H1 (cell line): ENCODE measurements at regions of chr10 and their contacts with region 1.

Region 1: GRCh38 chr10:77501152-77501845 is 136.3 kb downstream of the KCNMA1 start:
- DNase-seq: no peak
- H3K4me3 ChIP-seq: no peak overlapping the region
- H3K27ac ChIP-seq: no peak overlapping the region
- H3K4me1 ChIP-seq: peaks cover 2 to 9% (median 3%) of the 10 kb centered on the region in 4 experiments; a peak in 3 of 7 replicates
- H3K27me3 ChIP-seq: no peaks in the 10 kb centered on the region
- CTCF ChIP-seq: no peak
- EP300 ChIP-seq: no peak
- POLR2A ChIP-seq: no peak
- RAD21 ChIP-seq: no peak

Region 2: DNA sequence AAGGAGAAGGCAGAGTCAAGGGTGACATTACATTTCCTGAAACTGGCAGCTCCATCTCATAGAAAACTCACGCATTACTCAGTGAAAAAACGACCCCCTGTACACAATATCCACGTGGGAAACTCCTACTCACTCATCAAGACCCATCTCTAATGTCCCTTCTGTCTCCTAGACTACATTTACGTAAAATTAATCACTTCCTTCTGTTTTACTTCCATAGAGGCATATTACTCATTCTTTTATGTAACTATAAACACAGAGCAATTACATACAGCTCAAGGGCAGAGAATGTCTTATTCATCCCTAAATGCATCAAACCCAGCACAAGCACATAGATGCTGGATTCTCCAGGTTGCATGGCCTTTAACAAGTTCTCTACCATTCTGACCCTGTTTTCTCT is 145.5 kb before region 1 on chr10:
- CTCF ChIA-PET with region 1: no interaction called
- POLR2A ChIA-PET with region 1: no interaction called
- DNase-seq: no peak
- H3K4me3 ChIP-seq: no peak overlapping the region
- H3K27ac ChIP-seq: no peak overlapping the region
- H3K4me1 ChIP-seq: no peaks in the 10 kb centered on the region
- H3K27me3 ChIP-seq: no peaks in the 10 kb centered on the region
- CTCF ChIP-seq: no peak
- EP300 ChIP-seq: no peak
- POLR2A ChIP-seq: no peak
- RAD21 ChIP-seq: no peak

Region 3: DNA sequence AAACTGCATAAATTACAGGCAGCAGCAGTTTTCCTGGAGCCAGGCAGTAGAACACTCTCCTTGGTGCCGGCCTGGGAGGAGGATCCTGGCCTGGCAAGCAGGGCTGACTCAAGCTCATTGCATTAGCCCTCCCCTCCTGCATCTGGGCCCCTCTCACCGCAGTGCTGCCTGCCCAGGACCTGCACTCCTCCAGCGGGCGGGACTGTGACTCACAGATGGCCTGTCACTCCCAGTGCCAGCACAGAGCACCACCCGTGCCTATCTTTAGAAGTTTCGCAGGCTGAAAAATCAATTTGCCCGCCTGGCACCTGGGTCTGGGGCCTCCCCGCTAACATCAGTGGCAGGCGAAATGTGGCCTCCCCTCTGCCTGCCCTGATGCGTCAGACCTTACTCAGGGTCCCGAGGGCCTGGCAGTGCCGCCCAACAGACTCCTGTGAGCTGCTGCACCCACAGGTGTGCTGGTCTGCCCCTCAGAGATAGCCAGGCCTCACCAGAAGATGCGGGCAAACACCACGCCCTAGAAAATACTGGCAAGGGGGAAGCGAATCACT is 12.6 kb after region 1 on chr10:
- CTCF ChIA-PET with region 1: interaction called, 10 read pairs
- POLR2A ChIA-PET with region 1: no interaction called
- DNase-seq: no peak
- H3K4me3 ChIP-seq: no peak overlapping the region
- H3K27ac ChIP-seq: no peak overlapping the region
- H3K4me1 ChIP-seq: peaks cover 2 to 14% (median 7%) of the 10 kb centered on the region in 4 experiments; a peak in 6 of 7 replicates
- H3K27me3 ChIP-seq: no peaks in the 10 kb centered on the region
- CTCF ChIP-seq: no peak
- EP300 ChIP-seq: no peak
- POLR2A ChIP-seq: no peak
- RAD21 ChIP-seq: no peak

Region 4: GRCh38 chr10:77661100-77661499 is 159.8 kb after region 1 on chr10:
- CTCF ChIA-PET with region 1: no interaction called
- POLR2A ChIA-PET with region 1: no interaction called
- DNase-seq: peak in 1 of 2 experiments; percentile 42
- H3K4me3 ChIP-seq: no peak overlapping the region
- H3K27ac ChIP-seq: no peak overlapping the region
- H3K4me1 ChIP-seq: peaks cover 0 to 8% (median 2%) of the 10 kb centered on the region in 4 experiments; a peak in 3 of 7 replicates
- H3K27me3 ChIP-seq: no peaks in the 10 kb centered on the region
- CTCF ChIP-seq: peak; percentile 28 to 52 (median 34); a peak in 3 of 4 replicates
- EP300 ChIP-seq: no peak
- POLR2A ChIP-seq: no peak
- RAD21 ChIP-seq: peak; percentile 24 to 33; a peak in 2 of 4 replicates

Region 5: GRCh38 chr10:77746047-77746707 is 244.9 kb after region 1 on chr10:
- CTCF ChIA-PET with region 1: no interaction called
- POLR2A ChIA-PET with region 1: no interaction called
- DNase-seq: no peak
- H3K4me3 ChIP-seq: no peak overlapping the region
- H3K27ac ChIP-seq: no peak overlapping the region
- H3K4me1 ChIP-seq: no peaks in the 10 kb centered on the region
- H3K27me3 ChIP-seq: peaks cover 0 to 3% (median 0%) of the 10 kb centered on the region in 4 experiments; a peak in 1 of 7 replicates
- CTCF ChIP-seq: no peak
- EP300 ChIP-seq: no peak
- POLR2A ChIP-seq: no peak
- RAD21 ChIP-seq: no peak